OCI-LY7 (cell line): ENCODE measurements at regions of chr19 and their contacts with region 1.

Region 1: DNA sequence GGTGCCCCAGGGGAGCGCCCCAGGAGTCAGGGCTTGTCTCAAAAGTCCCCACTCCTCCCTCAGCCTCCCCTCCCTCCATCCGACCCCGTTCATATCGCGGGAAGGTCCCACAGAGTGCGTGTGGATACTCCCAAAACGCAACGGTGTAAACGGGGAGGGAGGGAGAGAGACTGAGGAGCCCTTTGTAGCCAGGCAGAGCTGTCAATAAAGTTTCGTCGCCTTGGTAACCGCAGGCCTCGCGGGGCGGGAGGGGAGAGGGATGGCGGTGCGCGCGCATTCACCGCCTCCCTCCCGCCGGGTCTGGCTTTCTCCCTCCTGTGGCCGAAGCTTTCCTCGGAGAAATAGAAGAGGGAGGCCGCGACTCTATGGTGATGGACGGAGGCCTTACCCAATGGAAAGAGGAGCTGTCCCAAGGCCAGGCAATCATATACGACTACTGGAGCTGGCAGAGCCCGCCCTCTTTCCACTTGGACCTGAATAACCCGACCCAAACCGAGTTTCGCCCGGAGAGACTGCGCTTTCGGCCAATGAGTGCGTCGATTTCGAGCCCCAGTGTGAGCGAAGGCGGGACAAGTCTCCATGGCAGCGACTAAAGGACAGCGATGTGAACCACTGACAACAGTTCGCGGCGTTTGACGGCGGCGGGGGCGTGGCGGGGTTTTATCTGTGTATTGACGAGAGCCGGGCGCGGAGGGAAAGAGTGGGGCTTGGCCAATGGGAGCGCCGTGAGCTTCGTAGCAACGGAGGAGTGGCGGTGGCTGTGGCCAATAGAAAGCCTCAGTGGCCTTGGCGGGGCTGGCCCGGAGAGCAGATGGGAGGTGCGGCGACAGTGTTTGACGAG is at the start of gene KMT5C:
- DNase-seq: peak; percentile 100
- H3K4me3 ChIP-seq: peak within 1 kb of the TSS; percentile 89
- H3K27ac ChIP-seq: peak within 1 kb of the TSS; percentile 53
- H3K4me1 ChIP-seq: peaks cover 28% of the 10 kb centered on the region
- CTCF ChIP-seq: no peak
- total RNA-seq, gene KMT5C: 21.2 and 22.8 TPM in 2 replicates

Region 2: DNA sequence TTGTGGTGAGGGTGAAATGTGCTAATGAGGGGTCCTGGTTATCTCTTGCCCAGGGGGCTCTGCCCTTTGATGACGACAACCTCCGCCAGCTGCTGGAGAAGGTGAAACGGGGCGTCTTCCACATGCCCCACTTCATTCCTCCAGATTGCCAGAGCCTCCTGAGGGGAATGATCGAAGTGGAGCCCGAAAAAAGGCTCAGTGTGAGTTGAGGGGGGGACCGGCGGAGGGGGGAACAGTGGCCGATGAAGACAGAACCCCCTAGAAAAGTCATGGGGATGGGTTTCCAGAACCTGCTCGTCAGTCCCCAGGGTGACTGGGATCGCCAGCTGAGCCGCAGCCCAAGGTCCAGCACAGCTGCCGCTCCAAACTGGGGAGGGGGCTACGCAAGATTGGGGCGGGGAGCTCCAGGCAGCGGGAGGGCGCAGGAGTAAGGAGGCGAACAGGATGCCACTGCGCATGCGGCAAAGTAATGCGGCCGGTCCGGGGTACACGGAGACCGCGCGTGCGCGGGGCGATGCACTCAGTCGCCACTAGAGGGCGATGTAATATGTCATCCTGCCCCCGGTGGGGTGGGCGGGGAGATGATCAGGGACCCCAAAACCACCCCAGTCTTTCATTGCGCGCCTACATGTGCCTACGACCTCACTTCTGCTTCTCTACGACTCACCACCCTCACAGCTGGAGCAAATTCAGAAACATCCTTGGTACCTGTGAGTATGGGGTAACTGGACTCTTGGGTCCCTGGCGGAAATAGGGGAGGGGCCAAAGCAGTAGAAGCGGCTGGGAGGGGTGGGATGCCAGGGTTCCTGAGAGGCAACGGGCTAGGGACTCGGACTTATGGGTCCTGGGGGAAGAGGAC is 37.6 kb before region 1 on chr19:
- CTCF ChIA-PET with region 1: interaction called, 3 read pairs
- POLR2A ChIA-PET with region 1: interaction called, 3 read pairs
- intact Hi-C with region 1: loop called (anchors 5 kb)
- DNase-seq: peak; percentile 91
- H3K4me3 ChIP-seq: peak overlapping the region; percentile 56
- H3K27ac ChIP-seq: peak overlapping the region; percentile 15
- H3K4me1 ChIP-seq: peaks cover 37% of the 10 kb centered on the region
- CTCF ChIP-seq: peak; percentile 96

Region 3: DNA sequence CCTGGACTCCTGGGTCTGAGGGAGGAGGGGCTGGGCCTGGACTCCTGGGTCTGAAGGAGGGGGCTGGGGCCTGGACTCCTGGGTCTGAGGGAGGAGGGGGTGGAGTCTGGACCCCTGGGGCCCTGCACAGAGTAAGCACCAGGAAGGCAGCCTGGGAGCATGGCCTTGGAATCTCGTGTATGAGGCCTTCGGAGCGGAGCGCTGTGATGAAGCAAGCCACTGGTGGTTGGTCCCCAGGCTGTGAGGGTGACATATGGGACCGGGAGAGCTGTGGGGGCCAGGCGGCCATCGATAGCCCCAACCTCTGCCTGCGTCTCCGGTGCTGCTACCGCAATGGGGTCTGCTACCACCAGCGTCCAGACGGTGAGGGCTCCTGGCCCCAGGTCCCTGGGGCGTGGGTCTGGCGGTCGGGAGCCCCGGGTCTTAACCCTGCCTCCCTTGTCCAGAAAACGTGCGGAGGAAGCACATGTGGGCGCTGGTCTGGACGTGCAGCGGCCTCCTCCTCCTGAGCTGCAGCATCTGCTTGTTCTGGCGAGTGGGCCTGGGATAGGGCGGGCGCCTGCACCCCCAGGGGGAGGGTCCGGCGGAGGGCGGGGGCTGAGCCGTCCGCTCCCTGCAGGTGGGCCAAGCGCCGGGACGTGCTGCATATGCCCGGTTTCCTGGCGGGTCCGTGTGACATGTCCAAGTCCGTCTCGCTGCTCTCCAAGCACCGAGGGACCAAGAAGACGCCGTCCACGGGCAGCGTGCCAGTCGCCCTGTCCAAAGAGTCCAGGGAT is 38.3 kb after region 1 on chr19:
- CTCF ChIA-PET with region 1: no interaction called
- POLR2A ChIA-PET with region 1: no interaction called
- intact Hi-C with region 1: no loop called
- DNase-seq: no peak
- H3K4me3 ChIP-seq: no peak overlapping the region
- H3K27ac ChIP-seq: no peak overlapping the region
- H3K4me1 ChIP-seq: no peaks in the 10 kb centered on the region
- CTCF ChIP-seq: no peak

Region 4: DNA sequence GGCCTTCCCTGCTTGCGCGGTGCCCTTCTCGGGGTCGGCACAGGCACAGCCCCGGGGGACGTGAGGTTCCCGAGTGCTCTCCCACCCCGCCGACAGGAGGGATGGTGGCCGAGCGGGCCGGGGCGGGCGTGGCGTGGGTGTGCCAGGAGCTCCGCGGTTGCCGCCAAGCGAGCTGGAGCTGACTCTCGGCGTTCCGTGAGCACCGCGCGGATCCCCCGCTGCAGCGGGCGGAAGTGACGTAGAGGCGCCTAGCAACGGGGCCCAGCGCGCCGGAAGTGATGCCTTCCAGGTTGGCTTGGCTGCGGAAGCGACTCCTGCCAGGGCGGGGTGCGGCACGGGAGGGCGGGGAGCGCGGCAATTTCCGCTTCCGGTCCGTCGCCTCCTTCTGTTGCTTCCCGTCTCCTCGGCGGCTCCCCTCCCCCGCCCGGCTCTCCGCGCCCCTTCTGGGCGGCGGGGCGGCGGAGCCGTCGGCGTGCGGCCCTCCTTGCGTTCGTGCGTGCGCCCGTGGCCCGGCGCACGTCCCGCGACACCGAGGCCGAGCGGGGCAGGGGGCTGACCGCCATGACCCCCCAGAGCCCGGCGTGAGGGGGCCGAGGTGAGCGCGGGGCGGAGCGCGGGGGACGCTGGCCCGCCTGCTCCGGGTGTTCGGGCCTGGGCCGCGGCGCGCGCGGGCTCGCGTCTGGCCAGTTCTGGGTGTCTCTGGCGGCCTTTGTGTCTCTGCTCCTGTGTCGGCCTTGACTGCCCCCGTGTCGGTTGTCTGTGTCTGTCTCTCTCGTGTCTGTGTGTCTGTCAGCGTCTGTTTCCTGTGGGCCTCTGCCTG is 335.8 kb after region 1 on chr19 and contains the start of gene EPN1:
- CTCF ChIA-PET with region 1: no interaction called
- POLR2A ChIA-PET with region 1: no interaction called
- intact Hi-C with region 1: no loop called
- DNase-seq: peak; percentile 98
- H3K4me3 ChIP-seq: peak within 1 kb of the TSS; percentile 95
- H3K27ac ChIP-seq: peak within 1 kb of the TSS; percentile 97
- H3K4me1 ChIP-seq: peaks cover 52% of the 10 kb centered on the region
- CTCF ChIP-seq: no peak
- total RNA-seq, gene EPN1: 40.5 and 46.3 TPM in 2 replicates